A549 (cell line): ENCODE measurements at regions of chr1 and their contacts with region 1.

Region 1: GRCh38 chr1:161139765-161140164 is 7.3 kb upstream of the DEDD start:
- DNase-seq: peak; percentile 35 to 44
- ATAC-seq: peak in 1 of 2 experiments; percentile 66; a peak in 3 of 6 replicates
- H3K4me3 ChIP-seq: no peak overlapping the region
- H3K27ac ChIP-seq: no peak overlapping the region
- H3K4me1 ChIP-seq: no peaks in the 10 kb centered on the region; the same call in 2 of the 3 replicates
- CTCF ChIP-seq: peak; percentile 53
- EP300 ChIP-seq: no peak
- POLR2A ChIP-seq: no peak
- RAD21 ChIP-seq: peak; percentile 56 to 62

Region 2: GRCh38 chr1:161082991-161083742 is 56.6 kb before region 1 on chr1:
- CTCF ChIA-PET with region 1: no interaction called
- POLR2A ChIA-PET with region 1: no interaction called
- DNase-seq: peak; percentile 69 to 91
- ATAC-seq: peak; percentile 90 to 91
- H3K4me3 ChIP-seq: no peak overlapping the region
- H3K27ac ChIP-seq: peak overlapping the region; percentile 88
- H3K4me1 ChIP-seq: peaks cover 56% of the 10 kb centered on the region
- CTCF ChIP-seq: no peak
- EP300 ChIP-seq: peak in 1 of 2 experiments; percentile 12; a peak in 1 of 5 replicates
- POLR2A ChIP-seq: peak; percentile 16; the same call in 1 of the 2 replicates
- RAD21 ChIP-seq: peak in 1 of 2 experiments; percentile 35; a peak in 2 of 5 replicates

Region 3: GRCh38 chr1:161159087-161159912 is 19.5 kb after region 1 on chr1 and contains the start of gene USP21:
- CTCF ChIA-PET with region 1: interaction called, 11 read pairs
- POLR2A ChIA-PET with region 1: interaction called, 4 read pairs
- DNase-seq: peak; percentile 89 to 98
- ATAC-seq: peak; percentile 86 to 94
- H3K4me3 ChIP-seq: peak within 1 kb of the TSS; percentile 97
- H3K27ac ChIP-seq: peak within 1 kb of the TSS; percentile 98
- H3K4me1 ChIP-seq: peaks cover 14% of the 10 kb centered on the region
- CTCF ChIP-seq: no peak
- EP300 ChIP-seq: no peak
- POLR2A ChIP-seq: peak; percentile 64
- RAD21 ChIP-seq: no peak
- polyA plus RNA-seq, gene USP21: 22.6 and 26.3 TPM in 2 replicates